Panc1 (cell line): ENCODE measurements at regions of chr13 and their contacts with region 1.

Region 1: GRCh38 chr13:71252184-71252704 is 614.8 kb downstream of the DACH1 start:
- DNase-seq: no peak
- ATAC-seq: no peak
- H3K4me3 ChIP-seq: no peak overlapping the region
- H3K27ac ChIP-seq: no peak overlapping the region
- H3K4me1 ChIP-seq: no peaks in the 10 kb centered on the region; the same call in 1 of the 2 replicates
- H3K27me3 ChIP-seq: no peaks in the 10 kb centered on the region
- CTCF ChIP-seq: no peak

Region 2: DNA sequence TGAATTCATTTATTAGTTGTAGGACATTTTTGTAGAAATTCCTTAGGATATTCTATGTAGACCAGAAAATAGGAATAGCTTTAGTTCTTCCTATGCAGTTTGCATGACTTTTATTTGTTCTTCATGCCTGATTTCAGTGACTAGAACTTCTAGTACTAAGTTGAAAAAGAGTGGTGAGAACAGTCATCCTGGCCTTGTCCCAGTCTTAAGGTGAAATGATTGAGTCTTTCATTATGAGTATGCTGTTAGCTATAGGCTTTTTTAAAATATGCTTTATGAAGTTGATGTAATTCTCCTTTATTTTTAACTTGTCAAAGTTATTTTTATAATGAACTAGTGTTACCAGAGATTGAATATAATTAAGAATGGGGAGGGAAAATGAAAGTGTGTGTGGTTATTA is 453.9 kb before region 1 on chr13:
- CTCF ChIA-PET with region 1: no interaction called
- POLR2A ChIA-PET with region 1: no interaction called
- in situ Hi-C with region 1: no loop called
- intact Hi-C with region 1: no loop called
- DNase-seq: no peak
- ATAC-seq: no peak
- H3K4me3 ChIP-seq: no peak overlapping the region
- H3K27ac ChIP-seq: no peak overlapping the region
- H3K4me1 ChIP-seq: no peaks in the 10 kb centered on the region
- H3K27me3 ChIP-seq: no peaks in the 10 kb centered on the region
- CTCF ChIP-seq: no peak

Region 3: GRCh38 chr13:71169180-71169579 is 83.1 kb before region 1 on chr13:
- CTCF ChIA-PET with region 1: no interaction called
- POLR2A ChIA-PET with region 1: no interaction called
- in situ Hi-C with region 1: no loop called
- intact Hi-C with region 1: no loop called
- DNase-seq: no peak
- ATAC-seq: no peak
- H3K4me3 ChIP-seq: no peak overlapping the region
- H3K27ac ChIP-seq: no peak overlapping the region
- H3K4me1 ChIP-seq: no peaks in the 10 kb centered on the region
- H3K27me3 ChIP-seq: no peaks in the 10 kb centered on the region
- CTCF ChIP-seq: no peak

Region 4: DNA sequence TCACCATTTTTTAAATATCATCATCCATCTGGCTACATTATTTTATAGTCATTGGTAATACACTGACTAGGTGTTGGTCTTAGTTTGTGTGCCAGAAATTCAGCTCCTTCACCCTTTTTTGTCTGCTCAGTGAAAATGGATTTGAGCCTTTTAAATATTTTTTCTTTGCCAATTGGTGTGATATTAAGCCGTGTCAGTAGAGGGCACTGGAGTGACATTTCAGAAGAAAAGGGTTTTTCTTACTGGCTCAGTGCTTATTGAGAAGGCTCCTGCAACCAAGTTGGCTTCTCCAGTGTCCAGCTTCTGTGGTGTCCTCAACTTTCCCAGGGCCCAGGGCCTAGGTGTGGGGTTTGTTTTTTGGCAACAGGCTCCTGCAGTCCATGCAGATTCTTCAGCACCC is 68.2 kb after region 1 on chr13:
- CTCF ChIA-PET with region 1: no interaction called
- POLR2A ChIA-PET with region 1: no interaction called
- in situ Hi-C with region 1: no loop called
- intact Hi-C with region 1: loop called (anchors 2 kb)
- DNase-seq: no peak
- ATAC-seq: no peak
- H3K4me3 ChIP-seq: no peak overlapping the region
- H3K27ac ChIP-seq: no peak overlapping the region
- H3K4me1 ChIP-seq: no peaks in the 10 kb centered on the region
- H3K27me3 ChIP-seq: no peaks in the 10 kb centered on the region
- CTCF ChIP-seq: peak; percentile 45

Region 5: DNA sequence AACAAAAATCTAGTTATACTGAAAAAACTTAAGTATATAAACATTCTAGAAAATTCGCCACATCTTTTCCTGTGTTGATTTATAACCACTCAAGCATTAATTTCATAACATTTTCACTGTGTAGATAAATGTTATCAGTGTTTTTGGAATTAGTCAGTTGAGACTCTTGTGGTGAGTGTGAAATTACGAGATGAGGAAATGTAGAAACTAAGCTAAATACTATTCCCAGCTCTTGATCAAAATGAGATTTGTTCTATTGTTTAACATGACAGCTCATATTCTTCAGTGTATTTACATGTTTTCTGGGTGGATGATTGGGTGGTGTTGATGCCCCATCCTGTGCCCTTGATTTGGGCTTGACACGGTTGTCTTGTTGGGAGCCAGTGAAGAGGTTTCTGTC is 208.0 kb after region 1 on chr13:
- CTCF ChIA-PET with region 1: no interaction called
- POLR2A ChIA-PET with region 1: interaction called, 10 read pairs
- in situ Hi-C with region 1: no loop called
- intact Hi-C with region 1: no loop called
- DNase-seq: no peak
- ATAC-seq: no peak
- H3K4me3 ChIP-seq: no peak overlapping the region
- H3K27ac ChIP-seq: no peak overlapping the region
- H3K4me1 ChIP-seq: no peaks in the 10 kb centered on the region
- H3K27me3 ChIP-seq: no peaks in the 10 kb centered on the region
- CTCF ChIP-seq: no peak